Endothelial cell of umbilical vein (primary cell): ENCODE measurements at regions of chr18 and their contacts with region 1.

Region 1: DNA sequence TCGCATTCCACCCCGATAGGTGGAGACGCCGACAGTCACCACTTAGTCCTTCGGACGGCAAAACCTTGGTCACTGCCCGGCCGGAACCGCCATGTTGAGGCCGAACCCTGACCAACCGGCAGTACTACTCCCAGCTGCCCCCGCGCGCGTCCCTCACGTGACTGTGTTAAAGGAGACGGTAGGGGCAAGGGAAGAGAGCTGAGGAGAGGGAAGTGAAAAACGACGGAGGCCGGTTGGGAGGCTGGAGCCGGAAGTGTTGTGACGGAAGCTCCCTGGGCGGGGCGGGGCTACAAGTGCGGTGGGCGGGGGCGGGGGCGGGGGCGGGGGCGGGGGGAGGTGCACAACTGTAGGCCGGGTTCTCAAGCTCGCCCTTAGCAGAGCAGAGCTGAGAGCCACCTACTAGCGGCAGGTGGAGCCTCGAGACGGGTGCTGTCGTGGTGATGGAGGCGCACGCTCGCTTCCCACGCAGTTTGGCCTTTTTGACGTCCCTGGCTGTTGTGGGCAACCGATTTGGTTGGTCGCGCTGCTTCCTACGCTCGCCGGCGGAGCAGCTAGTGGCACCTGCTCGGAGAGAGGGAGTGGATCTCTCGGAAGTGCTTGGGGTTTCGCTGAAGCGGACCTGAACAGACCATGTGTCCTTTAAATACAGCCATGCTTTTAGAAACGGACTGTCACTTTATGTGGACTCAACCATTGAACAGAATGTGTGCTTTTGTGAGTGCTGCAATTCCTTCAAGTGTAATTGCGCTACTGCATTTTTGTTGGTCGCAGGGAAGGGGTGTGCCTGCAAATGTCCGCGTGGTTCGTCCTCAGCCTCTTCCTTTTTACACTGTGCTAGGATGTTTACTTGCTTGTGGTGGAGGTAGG is at the start of gene TRAPPC8:
- DNase-seq: peak; percentile 98
- H3K4me3 ChIP-seq: peak within 1 kb of the TSS; percentile 76 to 86 (median 85)
- H3K27ac ChIP-seq: peak within 1 kb of the TSS; percentile 88
- H3K4me1 ChIP-seq: peaks cover 14% of the 10 kb centered on the region
- H3K27me3 ChIP-seq: peaks cover 0 to 2% of the 10 kb centered on the region in 2 experiments
- CTCF ChIP-seq: peak in 1 of 2 donors; percentile 11
- POLR2A ChIP-seq: peak; percentile 84
- total RNA-seq, gene TRAPPC8: 30.1 and 34.1 TPM in 2 replicates

Region 2: GRCh38 chr18:31685097-31686082 is 257.8 kb before region 1 on chr18:
- CTCF ChIA-PET with region 1: no interaction called
- POLR2A ChIA-PET with region 1: interaction called, 3 read pairs
- dilution Hi-C with region 1: no loop called
- intact Hi-C with region 1: loop called (anchors 2 kb)
- DNase-seq: peak; percentile 83
- H3K4me3 ChIP-seq: peak overlapping the region; percentile 52 to 68 (median 59)
- H3K27ac ChIP-seq: peak overlapping the region; percentile 39
- H3K4me1 ChIP-seq: peaks cover 31% of the 10 kb centered on the region
- H3K27me3 ChIP-seq: no peaks in the 10 kb centered on the region
- CTCF ChIP-seq: peak; percentile 35 to 50
- POLR2A ChIP-seq: peak; percentile 48

Region 3: GRCh38 chr18:31857526-31858106 is 85.6 kb before region 1 on chr18:
- CTCF ChIA-PET with region 1: interaction called, 3 read pairs
- POLR2A ChIA-PET with region 1: no interaction called
- dilution Hi-C with region 1: no loop called
- intact Hi-C with region 1: loop called (anchors 2 kb)
- DNase-seq: peak; percentile 65
- H3K4me3 ChIP-seq: no peak overlapping the region
- H3K27ac ChIP-seq: peak overlapping the region; percentile 12
- H3K4me1 ChIP-seq: peaks cover 15% of the 10 kb centered on the region
- H3K27me3 ChIP-seq: no peaks in the 10 kb centered on the region
- CTCF ChIP-seq: no peak
- POLR2A ChIP-seq: no peak

Region 4: DNA sequence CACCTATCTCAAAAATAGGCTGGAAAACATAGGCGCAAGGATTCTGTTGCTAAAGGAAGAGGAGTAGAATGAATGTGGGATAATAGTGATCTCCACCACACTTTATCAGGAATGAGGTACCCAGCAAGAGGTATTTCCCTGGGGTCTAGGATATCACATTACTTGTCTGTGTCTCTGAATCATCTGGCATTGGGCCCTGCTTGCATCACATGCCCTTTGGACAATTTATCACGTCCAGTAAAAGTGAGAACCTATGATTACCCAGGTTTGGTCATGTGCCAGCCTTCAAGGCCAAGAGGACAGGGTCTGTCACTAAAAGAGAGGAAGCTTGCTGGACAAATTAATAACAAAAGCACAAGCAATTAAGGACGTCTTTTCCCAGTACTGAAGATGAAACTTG is 11.1 kb after region 1 on chr18:
- CTCF ChIA-PET with region 1: interaction called, 11 read pairs
- POLR2A ChIA-PET with region 1: no interaction called
- dilution Hi-C with region 1: no loop called
- intact Hi-C with region 1: no loop called
- DNase-seq: no peak
- H3K4me3 ChIP-seq: no peak overlapping the region
- H3K27ac ChIP-seq: no peak overlapping the region
- H3K4me1 ChIP-seq: no peaks in the 10 kb centered on the region
- H3K27me3 ChIP-seq: no peaks in the 10 kb centered on the region
- CTCF ChIP-seq: no peak
- POLR2A ChIP-seq: no peak

Region 5: DNA sequence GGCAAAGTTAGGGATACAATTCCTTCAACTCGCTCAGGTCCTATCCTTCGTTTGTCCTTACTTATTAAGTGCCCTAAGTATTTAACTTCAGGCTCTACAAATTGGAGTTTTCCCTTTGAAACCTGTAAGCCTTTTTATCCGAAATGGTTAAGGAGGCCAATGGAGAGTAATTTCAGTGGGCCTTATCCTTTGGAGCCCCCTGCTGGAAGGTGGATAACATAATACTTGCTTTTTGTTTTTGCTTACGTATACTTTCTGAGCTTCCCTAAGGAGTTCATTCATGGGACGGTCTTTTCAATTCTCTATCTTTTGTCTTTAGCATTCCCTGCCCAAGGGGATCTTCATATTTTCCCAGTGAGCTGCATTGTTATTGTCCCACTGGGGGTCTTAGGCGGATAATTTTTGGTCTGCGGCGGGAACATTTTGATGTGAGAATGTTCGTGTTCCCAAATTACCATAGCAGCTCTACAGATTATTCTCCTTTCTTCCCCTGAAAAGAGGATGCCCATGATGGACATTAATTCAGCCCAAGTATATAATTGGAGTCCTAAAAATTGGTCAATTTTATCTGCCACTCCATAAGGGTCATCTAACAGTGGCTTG is 34.1 kb after region 1 on chr18:
- CTCF ChIA-PET with region 1: interaction called, 4 read pairs
- POLR2A ChIA-PET with region 1: no interaction called
- dilution Hi-C with region 1: no loop called
- intact Hi-C with region 1: loop called (anchors 2 kb)
- DNase-seq: peak; percentile 48
- H3K4me3 ChIP-seq: no peak overlapping the region
- H3K27ac ChIP-seq: no peak overlapping the region
- H3K4me1 ChIP-seq: peaks cover 3% of the 10 kb centered on the region
- H3K27me3 ChIP-seq: peaks cover 0 to 5% of the 10 kb centered on the region in 2 experiments
- CTCF ChIP-seq: peak; percentile 55 to 59
- POLR2A ChIP-seq: no peak

Region 6: GRCh38 chr18:32018331-32019250 is 75.4 kb after region 1 on chr18 and contains the start of gene RNF125:
- CTCF ChIA-PET with region 1: no interaction called
- POLR2A ChIA-PET with region 1: no interaction called
- dilution Hi-C with region 1: no loop called
- intact Hi-C with region 1: loop called (anchors 2 kb)
- DNase-seq: peak; percentile 69
- H3K4me3 ChIP-seq: peak within 1 kb of the TSS; percentile 34 to 57 (median 42)
- H3K27ac ChIP-seq: no peak within 1 kb of the TSS
- H3K4me1 ChIP-seq: peaks cover 11% of the 10 kb centered on the region
- H3K27me3 ChIP-seq: peaks cover 1 to 2% of the 10 kb centered on the region in 2 experiments
- CTCF ChIP-seq: no peak
- POLR2A ChIP-seq: no peak
- total RNA-seq, gene RNF125: 0.92 and 1.3 TPM in 2 replicates

Region 7: GRCh38 chr18:32092422-32093101 is 149.3 kb after region 1 on chr18:
- CTCF ChIA-PET with region 1: interaction called, 3 read pairs
- POLR2A ChIA-PET with region 1: no interaction called
- dilution Hi-C with region 1: no loop called
- intact Hi-C with region 1: loop called (anchors 1 kb)
- DNase-seq: peak; percentile 98
- H3K4me3 ChIP-seq: peak overlapping the region; percentile 30 to 88 (median 81)
- H3K27ac ChIP-seq: peak overlapping the region; percentile 95
- H3K4me1 ChIP-seq: peaks cover 12% of the 10 kb centered on the region
- H3K27me3 ChIP-seq: no peaks in the 10 kb centered on the region
- CTCF ChIP-seq: no peak
- POLR2A ChIP-seq: peak; percentile 73